Activated naive CD4-positive, alpha-beta T cell treated with anti-CD3 and anti-CD28 coated beads, Interleukin-2, amount 10 ng/mL, durations not matched to agents 7 days and 5 days (primary cell): ENCODE measurements at regions of chr3 and their contacts with region 1.

Region 1: DNA sequence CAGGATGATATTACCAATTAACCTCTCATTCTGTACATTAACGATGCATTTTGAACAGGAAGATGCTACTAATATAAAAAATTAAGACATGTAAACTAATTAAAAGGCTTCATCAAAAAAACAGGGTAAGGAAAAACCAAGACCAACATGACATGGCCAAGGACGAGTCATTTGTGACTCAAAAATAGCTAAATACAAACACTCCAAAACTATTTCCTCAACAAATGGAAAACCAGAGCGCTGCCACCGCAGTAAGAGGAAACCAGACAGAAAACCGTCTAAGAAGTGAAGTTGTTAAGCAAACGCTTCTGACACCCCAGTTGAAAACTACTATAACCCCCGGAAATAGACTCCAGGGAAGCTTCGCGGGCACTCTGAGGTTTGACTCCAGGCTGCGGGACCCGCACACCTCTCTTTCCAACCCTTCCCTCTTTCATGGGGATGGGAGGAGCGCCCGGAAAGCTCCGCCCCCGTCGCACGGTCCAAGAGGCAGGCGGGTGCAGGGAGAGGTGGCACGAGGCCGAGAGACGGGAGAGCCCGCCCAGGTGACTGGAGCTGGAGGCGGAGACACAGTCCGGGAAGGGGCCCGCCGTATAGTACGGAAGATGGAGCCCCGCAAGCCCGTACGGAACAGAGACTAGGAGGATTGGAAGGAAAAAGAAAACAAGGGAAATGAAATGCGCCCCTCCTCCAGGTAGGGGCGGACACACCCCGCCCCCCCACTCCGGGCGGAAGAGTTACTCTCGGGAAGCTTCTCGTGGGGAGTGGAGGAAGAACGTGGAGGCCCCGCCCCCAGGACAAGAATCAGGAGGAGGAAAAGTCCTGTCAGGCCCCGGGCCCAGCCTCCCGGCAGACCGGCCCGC is 708 bp downstream of the DCAF1 start:
- DNase-seq: peak; percentile 92
- H3K4me3 Mint-ChIP-seq: peak overlapping the region; percentile 79
- H3K27ac Mint-ChIP-seq: peak overlapping the region; percentile 92
- H3K4me1 Mint-ChIP-seq: peaks cover 31% of the 10 kb centered on the region
- H3K27me3 Mint-ChIP-seq: peaks cover 8% of the 10 kb centered on the region

Region 2: DNA sequence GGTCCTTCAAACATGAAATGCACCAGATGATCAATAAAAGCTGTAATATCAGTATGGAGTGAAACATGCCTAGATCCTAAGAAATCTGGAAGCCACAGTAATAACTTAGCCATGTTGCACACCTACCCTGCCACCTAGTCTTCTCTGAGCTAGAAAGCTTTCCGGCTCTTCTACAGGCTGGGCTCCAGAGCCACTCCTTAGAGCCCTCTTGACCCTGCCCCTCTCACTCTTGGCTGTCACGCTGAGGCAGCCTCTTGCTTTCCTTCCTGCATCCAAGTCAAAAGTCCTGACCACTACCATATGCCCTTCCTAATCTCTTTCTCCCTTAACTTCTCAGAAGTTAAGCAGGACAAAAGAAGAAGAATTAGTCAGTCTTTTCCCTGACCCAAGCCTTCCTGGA is 90.3 kb before region 1 on chr3:
- CTCF ChIA-PET with region 1: no interaction called
- DNase-seq: no peak
- H3K4me3 Mint-ChIP-seq: no peak overlapping the region
- H3K27ac Mint-ChIP-seq: no peak overlapping the region
- H3K4me1 Mint-ChIP-seq: peaks cover 6% of the 10 kb centered on the region
- H3K27me3 Mint-ChIP-seq: no peaks in the 10 kb centered on the region

Region 3: GRCh38 chr3:51514210-51514609 is 15.1 kb after region 1 on chr3:
- CTCF ChIA-PET with region 1: interaction called, 17 read pairs
- DNase-seq: no peak
- H3K4me3 Mint-ChIP-seq: no peak overlapping the region
- H3K27ac Mint-ChIP-seq: no peak overlapping the region
- H3K4me1 Mint-ChIP-seq: peaks cover 28% of the 10 kb centered on the region
- H3K27me3 Mint-ChIP-seq: no peaks in the 10 kb centered on the region

Region 4: GRCh38 chr3:51568036-51568435 is 68.9 kb after region 1 on chr3:
- CTCF ChIA-PET with region 1: no interaction called
- DNase-seq: no peak
- H3K4me3 Mint-ChIP-seq: no peak overlapping the region
- H3K27ac Mint-ChIP-seq: no peak overlapping the region
- H3K4me1 Mint-ChIP-seq: no peaks in the 10 kb centered on the region
- H3K27me3 Mint-ChIP-seq: no peaks in the 10 kb centered on the region

Region 5: GRCh38 chr3:51637941-51638471 is 138.9 kb after region 1 on chr3:
- CTCF ChIA-PET with region 1: interaction called, 24 read pairs
- DNase-seq: peak; percentile 69
- H3K4me3 Mint-ChIP-seq: no peak overlapping the region
- H3K27ac Mint-ChIP-seq: no peak overlapping the region
- H3K4me1 Mint-ChIP-seq: no peaks in the 10 kb centered on the region
- H3K27me3 Mint-ChIP-seq: no peaks in the 10 kb centered on the region

Region 6: DNA sequence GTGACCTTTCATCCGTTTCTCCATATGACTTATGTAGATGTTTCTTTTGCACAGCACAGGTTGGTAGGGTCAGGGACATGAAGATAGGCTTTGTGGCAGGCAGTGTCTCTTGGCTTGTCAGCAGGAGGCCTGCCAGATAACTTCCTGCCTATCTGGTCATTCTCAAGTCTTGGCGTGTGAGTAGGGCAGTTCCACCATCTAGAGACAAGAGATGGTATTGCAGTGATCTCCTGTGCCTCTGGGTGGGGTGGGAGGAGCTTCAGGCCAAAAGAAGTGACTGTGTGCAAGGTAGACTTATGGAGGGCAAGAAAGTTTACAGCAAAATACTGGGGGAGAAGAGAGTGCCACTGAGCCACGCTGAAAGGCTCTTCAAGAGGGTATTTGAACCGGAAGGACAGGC is 183.0 kb after region 1 on chr3:
- CTCF ChIA-PET with region 1: interaction called, 123 read pairs
- DNase-seq: peak; percentile 86
- H3K4me3 Mint-ChIP-seq: peak overlapping the region; percentile 52
- H3K27ac Mint-ChIP-seq: peak overlapping the region; percentile 86
- H3K4me1 Mint-ChIP-seq: peaks cover 99% of the 10 kb centered on the region
- H3K27me3 Mint-ChIP-seq: no peaks in the 10 kb centered on the region

Region 7: GRCh38 chr3:51734572-51734907 is 235.4 kb after region 1 on chr3:
- CTCF ChIA-PET with region 1: no interaction called
- DNase-seq: peak; percentile 37
- H3K4me3 Mint-ChIP-seq: peak overlapping the region; percentile 37
- H3K27ac Mint-ChIP-seq: peak overlapping the region; percentile 60
- H3K4me1 Mint-ChIP-seq: peaks cover 15% of the 10 kb centered on the region
- H3K27me3 Mint-ChIP-seq: peaks cover 22% of the 10 kb centered on the region

Region 8: DNA sequence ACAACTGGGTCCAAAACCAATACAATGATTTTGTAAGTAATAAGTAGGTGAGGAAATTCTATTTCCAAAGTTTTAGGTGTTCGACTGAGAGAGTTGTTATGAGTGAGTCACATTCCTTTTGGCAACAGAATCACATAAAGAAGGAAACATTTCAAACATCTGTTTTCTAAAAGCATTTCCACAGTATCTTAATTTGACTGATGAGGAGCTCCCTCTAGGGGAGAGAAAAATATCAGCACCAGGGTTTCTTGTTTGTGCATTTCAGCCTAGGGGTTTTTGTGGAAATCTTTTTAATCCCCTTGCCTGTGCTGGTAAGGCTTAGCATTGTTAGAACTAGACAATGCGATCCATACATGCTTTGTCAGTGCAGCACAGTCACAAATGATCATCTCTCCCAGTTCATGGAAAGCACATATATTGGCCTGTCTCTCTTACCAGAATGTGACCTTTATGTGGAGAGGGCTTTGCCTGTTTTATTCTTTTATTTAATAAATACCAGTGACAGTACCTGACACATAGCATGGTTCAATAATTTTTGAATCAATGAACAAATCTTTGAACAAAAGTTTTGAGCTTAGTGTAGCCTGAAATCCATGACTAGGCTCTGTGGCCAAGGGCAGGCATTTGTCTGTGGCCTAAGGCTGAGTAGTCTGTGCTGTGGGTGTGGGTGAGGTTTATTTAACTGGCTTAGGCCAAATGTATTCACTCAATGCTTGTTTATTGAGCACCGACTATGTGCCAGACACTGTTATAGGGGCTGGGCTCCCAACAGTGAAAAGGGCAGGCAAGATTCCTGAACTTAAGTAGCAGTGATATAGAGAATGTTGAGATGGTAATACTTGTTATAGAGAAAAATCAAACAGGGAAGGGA is 301.0 kb after region 1 on chr3:
- CTCF ChIA-PET with region 1: interaction called, 12 read pairs
- DNase-seq: peak; percentile 33
- H3K4me3 Mint-ChIP-seq: no peak overlapping the region
- H3K27ac Mint-ChIP-seq: no peak overlapping the region
- H3K4me1 Mint-ChIP-seq: peaks cover 42% of the 10 kb centered on the region
- H3K27me3 Mint-ChIP-seq: peaks cover 13% of the 10 kb centered on the region